AG04450 (cell line): ENCODE measurements at regions of chr7 and their contacts with region 1.

Region 1: DNA sequence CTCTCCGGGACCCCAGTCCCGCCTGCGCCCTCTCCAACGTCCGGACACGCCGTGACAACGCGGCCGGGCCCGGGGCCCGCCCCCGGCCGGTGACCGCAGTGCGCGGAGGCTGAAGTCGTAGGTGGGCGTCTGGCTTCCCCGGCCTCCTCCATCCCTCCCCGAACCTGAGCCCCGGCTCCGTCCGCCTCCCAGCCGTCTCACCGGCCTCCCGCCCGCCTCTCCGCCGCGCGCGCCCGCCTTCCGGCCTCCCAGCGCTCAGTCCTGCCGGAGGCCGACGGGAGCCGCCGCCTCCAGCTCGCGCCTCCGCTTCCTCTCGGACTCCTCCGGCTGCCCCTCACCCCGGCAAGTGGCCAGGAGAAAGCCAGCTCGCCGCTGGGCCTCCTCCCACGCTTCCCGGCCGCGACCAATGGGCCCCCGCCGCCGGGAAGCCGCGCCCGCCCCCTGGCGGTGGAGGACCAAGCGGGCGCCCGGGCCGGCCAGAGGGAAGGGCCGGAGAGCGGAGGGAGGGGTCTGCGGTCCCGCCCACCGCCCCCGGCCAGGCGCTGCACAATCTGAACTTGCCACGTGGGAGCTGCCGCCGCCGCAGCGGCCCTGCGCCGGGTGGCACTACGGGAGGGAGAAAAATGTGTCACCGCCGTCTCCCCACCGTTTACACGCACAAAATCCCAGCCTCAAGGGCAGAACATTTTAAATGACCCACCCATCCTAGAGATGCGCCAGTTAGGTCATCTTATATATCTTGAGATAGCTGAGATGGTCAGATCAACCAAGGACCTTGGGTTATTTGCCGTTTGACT is at the start of gene FAM3C:
- DNase-seq: peak; percentile 79
- H3K4me3 ChIP-seq: peak within 1 kb of the TSS; percentile 76
- H3K27ac ChIP-seq: peak within 1 kb of the TSS; percentile 48
- H3K27me3 ChIP-seq: no peaks in the 10 kb centered on the region
- CTCF ChIP-seq: peak; percentile 70
- polyA plus RNA-seq, gene FAM3C: 33.2 and 48.7 TPM in 2 replicates

Region 2: DNA sequence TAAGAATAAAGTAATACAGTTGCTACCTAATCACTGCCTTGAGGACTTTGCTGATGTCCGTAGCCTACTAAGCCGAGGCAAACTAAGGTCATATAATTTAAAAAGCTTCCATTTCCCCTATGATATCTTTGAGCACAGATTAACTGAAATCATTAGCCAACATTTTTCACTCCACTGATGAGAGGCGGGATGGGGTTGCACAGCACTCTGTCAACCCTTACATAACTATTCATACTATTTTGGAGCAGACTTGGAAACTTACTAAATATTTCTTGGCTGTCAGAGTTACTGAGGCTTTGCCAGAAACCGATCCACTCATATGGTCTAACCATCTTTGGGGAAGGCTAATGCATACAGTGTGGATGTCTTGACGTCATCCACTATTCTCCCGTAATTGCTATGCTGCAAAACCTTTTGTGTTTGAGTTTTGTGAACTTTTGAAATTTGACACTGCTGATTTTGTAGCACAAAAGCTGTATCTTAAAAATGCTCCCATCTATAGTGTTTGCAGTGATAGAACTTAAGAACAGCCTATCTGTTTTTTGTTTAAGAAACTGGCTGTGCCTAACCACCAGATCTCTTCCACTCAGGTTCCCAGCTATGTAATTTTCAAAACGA is 786.9 kb before region 1 on chr7:
- CTCF ChIA-PET with region 1: no interaction called
- POLR2A ChIA-PET with region 1: no interaction called
- DNase-seq: no peak
- H3K4me3 ChIP-seq: no peak overlapping the region
- H3K27ac ChIP-seq: no peak overlapping the region
- H3K27me3 ChIP-seq: no peaks in the 10 kb centered on the region
- CTCF ChIP-seq: no peak

Region 3: GRCh38 chr7:121351679-121352078 is 44.5 kb before region 1 on chr7:
- CTCF ChIA-PET with region 1: interaction called, 11 read pairs
- POLR2A ChIA-PET with region 1: no interaction called
- DNase-seq: no peak
- H3K4me3 ChIP-seq: no peak overlapping the region
- H3K27ac ChIP-seq: no peak overlapping the region
- H3K27me3 ChIP-seq: no peaks in the 10 kb centered on the region
- CTCF ChIP-seq: no peak

Region 4: DNA sequence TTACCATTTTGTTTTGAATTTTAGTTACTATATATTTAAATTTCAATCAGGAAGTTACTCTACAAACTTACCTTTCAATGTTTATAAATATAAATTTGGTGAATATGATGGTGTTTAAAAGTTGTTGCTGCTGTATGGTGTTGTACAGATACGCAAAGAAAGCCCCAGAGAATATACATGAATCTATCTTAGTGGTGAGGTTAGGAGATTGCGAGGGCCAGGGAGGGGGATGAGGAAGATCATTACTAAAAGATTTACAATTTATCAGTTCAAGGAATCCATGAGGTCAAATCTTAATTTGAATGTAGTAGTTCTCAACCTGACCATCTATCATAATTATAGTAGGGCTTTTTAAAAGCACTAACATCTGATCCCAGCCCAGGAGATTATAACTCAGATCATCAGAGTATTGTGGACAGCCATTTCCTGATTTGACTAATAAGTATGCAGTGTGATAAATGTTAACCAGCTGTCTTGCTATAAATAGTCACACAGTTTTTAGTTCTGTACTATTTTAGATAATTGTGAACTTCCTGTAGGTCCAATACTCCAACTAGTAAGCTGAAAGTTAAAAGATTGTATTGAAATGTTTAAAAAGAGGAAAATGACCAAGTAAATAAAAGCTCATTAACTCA is 23.7 kb before region 1 on chr7:
- CTCF ChIA-PET with region 1: interaction called, 97 read pairs
- POLR2A ChIA-PET with region 1: interaction called, 4 read pairs
- DNase-seq: no peak
- H3K4me3 ChIP-seq: no peak overlapping the region
- H3K27ac ChIP-seq: no peak overlapping the region
- H3K27me3 ChIP-seq: no peaks in the 10 kb centered on the region
- CTCF ChIP-seq: no peak

Region 5: DNA sequence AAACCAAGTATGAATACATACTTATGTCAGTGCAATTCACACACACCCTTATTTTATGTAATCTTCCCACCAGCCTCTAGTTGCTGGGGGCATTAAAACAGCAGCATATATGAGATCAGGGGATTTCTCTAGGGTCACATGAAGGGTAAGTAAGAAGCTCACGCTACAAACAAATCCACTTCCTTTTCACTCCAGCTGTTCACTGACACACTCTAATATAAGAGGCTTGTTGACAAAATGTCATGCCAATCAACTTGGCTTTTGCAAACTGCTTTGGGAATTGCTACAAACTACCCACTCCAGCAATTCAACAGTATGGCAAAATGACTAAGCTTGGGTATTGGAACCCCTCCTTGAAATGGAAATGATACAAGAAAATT is 10.4 kb before region 1 on chr7:
- CTCF ChIA-PET with region 1: interaction called, 107 read pairs
- POLR2A ChIA-PET with region 1: interaction called, 7 read pairs
- DNase-seq: no peak
- H3K4me3 ChIP-seq: no peak overlapping the region
- H3K27ac ChIP-seq: no peak overlapping the region
- H3K27me3 ChIP-seq: no peaks in the 10 kb centered on the region
- CTCF ChIP-seq: no peak

Region 6: GRCh38 chr7:121420979-121421378 is 24.8 kb after region 1 on chr7:
- CTCF ChIA-PET with region 1: interaction called, 18 read pairs
- POLR2A ChIA-PET with region 1: no interaction called
- DNase-seq: no peak
- H3K4me3 ChIP-seq: no peak overlapping the region
- H3K27ac ChIP-seq: no peak overlapping the region
- H3K27me3 ChIP-seq: no peaks in the 10 kb centered on the region
- CTCF ChIP-seq: no peak

Region 7: DNA sequence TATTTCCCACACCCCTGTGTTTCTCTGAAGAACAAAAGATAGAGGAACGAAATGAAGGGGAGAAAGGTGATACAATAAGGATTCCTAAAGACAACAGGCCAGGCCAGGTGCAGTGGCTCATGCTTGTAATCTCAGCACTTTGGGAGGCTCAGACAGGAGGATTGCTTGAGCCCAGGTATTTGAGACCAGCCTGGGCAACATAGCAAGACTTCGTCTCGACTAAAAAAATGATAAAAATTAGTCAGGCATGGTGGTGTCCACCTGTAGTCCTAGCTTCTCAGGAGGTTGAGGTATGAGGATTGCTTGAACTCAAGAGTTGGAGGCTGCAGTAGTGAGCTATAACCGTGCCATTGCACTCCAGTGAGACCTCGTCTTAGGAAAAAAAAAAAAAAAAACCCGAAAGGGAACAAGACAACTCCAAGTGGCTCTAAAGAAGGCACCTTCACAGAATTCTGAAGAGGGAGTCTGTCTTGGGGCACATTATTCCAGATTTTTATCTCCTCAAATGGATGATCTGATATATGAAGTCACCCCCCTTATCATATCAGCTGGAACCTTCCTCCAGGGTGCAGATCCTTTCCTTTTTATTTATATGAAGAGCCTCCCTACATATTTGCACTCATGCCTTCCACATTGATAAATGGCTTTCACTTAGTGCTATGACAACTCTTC is 41.4 kb after region 1 on chr7:
- CTCF ChIA-PET with region 1: interaction called, 15 read pairs
- POLR2A ChIA-PET with region 1: interaction called, 3 read pairs
- DNase-seq: no peak
- H3K4me3 ChIP-seq: no peak overlapping the region
- H3K27ac ChIP-seq: no peak overlapping the region
- H3K27me3 ChIP-seq: peaks cover 4% of the 10 kb centered on the region
- CTCF ChIP-seq: no peak

Region 8: GRCh38 chr7:121547544-121548092 is 151.5 kb after region 1 on chr7:
- CTCF ChIA-PET with region 1: interaction called, 19 read pairs
- POLR2A ChIA-PET with region 1: interaction called, 6 read pairs
- DNase-seq: peak; percentile 29
- H3K4me3 ChIP-seq: no peak overlapping the region
- H3K27ac ChIP-seq: no peak overlapping the region
- H3K27me3 ChIP-seq: no peaks in the 10 kb centered on the region
- CTCF ChIP-seq: peak; percentile 79

Region 9: GRCh38 chr7:121752706-121753105 is 356.5 kb after region 1 on chr7:
- CTCF ChIA-PET with region 1: no interaction called
- POLR2A ChIA-PET with region 1: no interaction called
- DNase-seq: no peak
- H3K4me3 ChIP-seq: no peak overlapping the region
- H3K27ac ChIP-seq: no peak overlapping the region
- H3K27me3 ChIP-seq: no peaks in the 10 kb centered on the region
- CTCF ChIP-seq: peak; percentile 43